Activated CD4-positive, alpha-beta T cell treated with anti-CD3 and anti-CD28 coated beads for 36 hours (primary cell): ENCODE measurements at regions of chr9 and their contacts with region 1.

Region 1: DNA sequence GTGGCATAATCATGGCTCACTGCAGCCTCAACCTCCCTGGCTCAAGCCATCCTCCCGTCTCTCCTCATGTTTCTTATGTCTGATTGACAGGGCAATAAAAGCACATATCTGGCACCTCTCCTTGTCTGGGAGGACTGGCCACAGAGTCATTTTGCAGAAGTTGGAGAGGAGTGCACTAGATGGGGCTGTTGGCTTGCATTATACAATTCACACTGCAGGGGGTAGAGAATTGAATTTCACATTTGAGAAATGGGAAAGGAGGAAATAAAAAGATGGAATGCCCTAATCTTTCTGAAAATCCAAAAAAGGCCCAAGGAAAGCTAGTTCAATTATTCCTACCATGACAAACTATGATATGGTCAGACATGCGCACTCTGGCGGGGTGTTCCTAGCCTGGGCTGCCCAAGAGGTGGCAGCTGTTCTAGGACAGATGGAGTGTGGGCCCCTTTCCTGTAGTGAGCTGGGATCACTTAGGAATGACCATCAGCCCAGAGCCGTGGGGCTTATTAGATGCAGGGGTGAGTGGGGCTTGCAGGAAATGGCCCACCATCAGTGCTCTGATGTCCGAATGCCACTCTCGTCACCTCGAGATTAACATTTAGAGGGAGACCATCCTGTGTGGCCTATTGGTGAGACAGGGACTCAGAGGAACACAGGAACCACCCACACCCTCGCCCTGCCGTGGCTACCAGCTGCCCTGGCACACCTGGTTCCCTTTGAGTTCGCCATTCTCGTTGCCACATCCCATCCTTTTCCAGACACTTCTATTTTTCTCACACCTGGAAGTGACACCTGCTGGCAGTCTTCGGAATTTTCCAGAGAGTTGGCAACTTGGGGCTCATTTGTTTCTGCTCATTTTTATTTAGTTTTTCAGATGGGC is 21.8 kb upstream of the ANKRD18A start:
- DNase-seq: peak; percentile 9
- ATAC-seq: no peak
- H3K4me3 Mint-ChIP-seq: no peak overlapping the region
- H3K27ac Mint-ChIP-seq: no peak overlapping the region
- H3K4me1 Mint-ChIP-seq: no peaks in the 10 kb centered on the region
- H3K27me3 Mint-ChIP-seq: peaks cover 8% of the 10 kb centered on the region

Region 2: DNA sequence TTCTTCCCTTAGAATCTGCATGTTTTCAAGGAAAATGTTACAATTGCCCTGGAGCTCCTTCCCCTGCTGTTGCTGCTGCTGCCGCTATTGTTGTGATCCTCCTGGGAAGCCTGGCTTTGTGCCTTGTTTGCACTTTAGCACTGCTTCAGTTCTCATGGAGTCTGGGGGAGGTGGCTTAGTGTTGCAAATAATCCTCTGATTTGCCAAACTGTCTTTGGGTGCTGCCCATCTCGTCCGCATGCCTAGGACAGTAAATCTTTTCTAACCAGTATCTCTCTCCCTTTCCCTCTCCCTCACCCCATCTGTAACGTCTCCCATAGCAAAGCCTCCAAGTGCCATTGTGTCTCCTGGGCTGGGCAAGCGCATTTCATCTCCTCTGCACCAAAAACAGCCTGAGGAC is 47.5 kb after region 1 on chr9:
- CTCF ChIA-PET with region 1: no interaction called
- POLR2A ChIA-PET with region 1: no interaction called
- intact Hi-C with region 1: loop called in 1 of 2 experiments (anchors 5 kb)
- DNase-seq: no peak
- ATAC-seq: no peak
- H3K4me3 Mint-ChIP-seq: no peak overlapping the region
- H3K27ac Mint-ChIP-seq: no peak overlapping the region
- H3K4me1 Mint-ChIP-seq: peaks cover 6% of the 10 kb centered on the region
- H3K27me3 Mint-ChIP-seq: peaks cover 7% of the 10 kb centered on the region